ENCODE measurements at regions of chr6 and their contacts with region 1.

Region 1: GRCh38 chr6:121020656-121021055 is 313.6 kb downstream of the TBC1D32 start:
- DNase-seq: no peak
- H3K4me3 Mint-ChIP-seq: no peak overlapping the region
- H3K27ac Mint-ChIP-seq: no peak overlapping the region
- H3K4me1 Mint-ChIP-seq: no peaks in the 10 kb centered on the region
- H3K27me3 Mint-ChIP-seq: no peaks in the 10 kb centered on the region
- CTCF ChIP-seq: no peak

Region 2: GRCh38 chr6:120471749-120472148 is 548.9 kb before region 1 on chr6:
- CTCF ChIA-PET with region 1: no interaction called
- POLR2A ChIA-PET with region 1: no interaction called
- intact Hi-C with region 1: no loop called
- DNase-seq: no peak
- H3K4me3 Mint-ChIP-seq: no peak overlapping the region
- H3K27ac Mint-ChIP-seq: no peak overlapping the region
- H3K4me1 Mint-ChIP-seq: no peaks in the 10 kb centered on the region
- H3K27me3 Mint-ChIP-seq: no peaks in the 10 kb centered on the region
- CTCF ChIP-seq: no peak

Region 3: GRCh38 chr6:120992257-120992656 is 28.4 kb before region 1 on chr6:
- CTCF ChIA-PET with region 1: no interaction called
- POLR2A ChIA-PET with region 1: no interaction called
- intact Hi-C with region 1: loop called (anchors 1 kb)
- DNase-seq: no peak
- H3K4me3 Mint-ChIP-seq: no peak overlapping the region
- H3K27ac Mint-ChIP-seq: no peak overlapping the region
- H3K4me1 Mint-ChIP-seq: peaks cover 5% of the 10 kb centered on the region
- H3K27me3 Mint-ChIP-seq: no peaks in the 10 kb centered on the region
- CTCF ChIP-seq: no peak